ENCODE measurements at regions of chr9 and their contacts with region 1.

Region 1: DNA sequence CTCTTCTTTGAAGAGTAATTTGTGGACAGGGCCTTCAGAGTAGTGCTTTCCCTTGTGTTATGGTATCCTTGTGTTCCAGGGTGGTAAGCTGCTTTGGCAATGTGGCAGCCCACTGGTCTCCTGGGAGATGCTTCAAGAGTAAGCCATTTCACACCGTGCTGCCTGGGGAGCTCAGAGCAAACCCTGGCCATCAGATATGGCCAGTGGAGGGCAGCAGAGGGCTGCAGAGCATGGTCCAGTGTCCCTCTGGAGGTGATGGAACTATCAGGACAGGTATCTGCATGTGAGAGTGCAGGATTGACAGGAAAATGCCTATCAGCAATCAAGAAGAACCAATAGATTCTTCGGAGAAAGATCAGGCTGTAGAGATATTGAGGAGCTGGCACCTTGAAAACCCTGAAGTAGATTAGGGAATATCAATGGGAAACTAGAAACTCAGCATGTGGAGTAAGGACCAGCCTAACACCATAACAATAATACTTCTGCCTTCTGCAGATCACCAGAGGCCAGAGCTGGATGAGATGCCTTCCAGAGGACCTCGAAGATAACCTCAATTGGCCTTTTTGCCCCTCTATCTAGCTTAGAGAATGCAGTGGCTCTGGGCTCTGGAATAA is 90.8 kb downstream of the PLPPR1 start:
- DNase-seq: peak; percentile 30 to 78 (median 62)
- H3K4me3 ChIP-seq: no peak overlapping the region
- H3K27ac ChIP-seq: no peak overlapping the region
- H3K4me1 ChIP-seq: peaks cover 0 to 4% of the 10 kb centered on the region in 2 donors
- H3K27me3 ChIP-seq: peaks cover 4% of the 10 kb centered on the region
- CTCF ChIP-seq: peak; percentile 66 to 76 (median 72)
- POLR2A ChIP-seq: no peak

Region 2: DNA sequence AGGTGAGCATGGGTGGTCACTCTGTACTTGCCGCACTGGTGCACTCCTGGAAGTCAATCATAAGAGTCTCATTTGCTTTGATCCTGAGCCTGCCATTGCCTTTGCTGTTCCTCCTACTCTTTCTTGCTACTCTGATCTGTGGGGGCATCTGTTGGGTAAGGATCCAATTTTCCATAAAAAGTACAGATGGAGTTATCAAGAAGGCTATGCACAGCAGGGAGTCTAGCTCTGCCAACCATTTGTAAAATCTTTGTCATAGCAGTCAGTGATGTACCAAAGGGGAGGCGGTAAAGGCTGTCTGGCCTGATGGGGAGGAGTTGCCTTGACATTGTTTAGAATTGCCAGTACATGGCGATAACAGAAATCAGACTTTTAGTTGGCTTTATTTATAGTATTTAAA is 199.8 kb before region 1 on chr9:
- intact Hi-C with region 1: no loop called
- DNase-seq: no peak
- H3K4me3 ChIP-seq: no peak overlapping the region
- H3K27ac ChIP-seq: no peak overlapping the region
- H3K4me1 ChIP-seq: no peaks in the 10 kb centered on the region
- H3K27me3 ChIP-seq: no peaks in the 10 kb centered on the region
- CTCF ChIP-seq: no peak
- POLR2A ChIP-seq: no peak

Region 3: GRCh38 chr9:101073122-101073521 is 46.2 kb before region 1 on chr9:
- intact Hi-C with region 1: no loop called
- DNase-seq: no peak
- H3K4me3 ChIP-seq: no peak overlapping the region
- H3K27ac ChIP-seq: no peak overlapping the region
- H3K4me1 ChIP-seq: no peaks in the 10 kb centered on the region
- H3K27me3 ChIP-seq: no peaks in the 10 kb centered on the region
- CTCF ChIP-seq: no peak
- POLR2A ChIP-seq: no peak

Region 4: DNA sequence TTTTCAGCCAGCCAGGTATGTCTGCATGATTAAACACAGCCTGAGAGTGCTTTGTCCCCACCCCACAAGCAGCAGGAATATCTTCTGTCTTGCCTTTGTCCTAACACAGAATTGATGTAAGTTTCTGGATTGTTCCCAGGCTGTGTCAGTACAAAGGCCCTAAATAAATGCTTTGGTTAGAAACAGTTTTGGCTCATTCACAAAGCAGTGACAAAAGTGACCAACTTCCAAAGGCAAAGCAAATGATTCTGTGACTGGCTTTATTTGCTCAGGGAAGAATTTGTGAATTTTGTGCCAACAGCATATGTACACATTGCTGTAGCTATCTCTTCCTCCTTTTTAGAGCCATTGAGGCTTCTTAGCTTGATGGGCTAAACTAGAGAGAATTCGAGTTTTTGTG is 42.9 kb after region 1 on chr9:
- intact Hi-C with region 1: no loop called
- DNase-seq: no peak
- H3K4me3 ChIP-seq: no peak overlapping the region
- H3K27ac ChIP-seq: no peak overlapping the region
- H3K4me1 ChIP-seq: no peaks in the 10 kb centered on the region
- H3K27me3 ChIP-seq: no peaks in the 10 kb centered on the region
- CTCF ChIP-seq: no peak
- POLR2A ChIP-seq: no peak

Region 5: GRCh38 chr9:101235105-101235866 is 116.0 kb after region 1 on chr9:
- intact Hi-C with region 1: loop called in 1 of 2 experiments (anchors 5 kb)
- DNase-seq: no peak
- H3K4me3 ChIP-seq: no peak overlapping the region
- H3K27ac ChIP-seq: no peak overlapping the region
- H3K4me1 ChIP-seq: no peaks in the 10 kb centered on the region
- H3K27me3 ChIP-seq: no peaks in the 10 kb centered on the region
- CTCF ChIP-seq: peak; percentile 40 to 63 (median 56)
- POLR2A ChIP-seq: no peak

Measured in adrenal gland (tissue), 19 donors.